ENCODE measurements at regions of chr4 and their contacts with region 1.

Region 1: DNA sequence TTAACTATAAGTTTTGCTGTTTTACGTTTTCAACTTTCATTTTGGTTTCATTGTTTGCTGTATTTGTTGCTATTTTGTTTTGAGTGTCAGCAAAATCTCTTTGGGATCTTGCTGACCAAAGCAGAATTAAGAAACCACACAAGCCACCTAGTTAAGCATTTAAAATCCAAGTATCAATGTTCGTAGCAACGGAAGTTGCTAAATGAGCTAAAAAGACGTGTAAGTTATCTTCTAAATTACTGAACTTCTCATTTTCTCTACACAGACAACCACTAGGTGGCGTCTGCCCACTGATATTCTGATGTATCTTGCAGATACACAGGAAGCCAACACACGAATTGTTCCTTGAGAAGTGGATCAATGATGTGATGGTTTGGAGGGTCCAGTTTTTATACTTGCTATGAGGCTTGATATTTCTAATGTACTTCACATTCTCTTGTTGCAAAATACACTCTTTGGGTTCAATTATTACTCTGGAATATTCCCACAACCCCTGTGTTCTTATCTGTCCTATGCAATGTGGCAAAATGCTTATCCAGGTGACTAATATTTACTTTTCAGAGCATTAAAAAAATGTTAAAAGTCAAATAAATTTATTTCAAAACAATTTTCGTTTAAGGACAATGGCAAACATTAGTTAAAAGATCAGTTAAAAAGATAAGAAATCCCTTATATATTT is 250.5 kb downstream of the TECRL start:
- DNase-seq: no peak
- H3K4me3 ChIP-seq: peak overlapping the region in 3 of 4 donors; percentile 5 to 38 (median 7)
- H3K27ac ChIP-seq: no peak overlapping the region
- H3K4me1 ChIP-seq: no peaks in the 10 kb centered on the region
- H3K27me3 ChIP-seq: no peaks in the 10 kb centered on the region
- CTCF ChIP-seq: peak; percentile 52 to 81 (median 70)
- EP300 ChIP-seq: no peak
- POLR2A ChIP-seq: no peak

Region 2: DNA sequence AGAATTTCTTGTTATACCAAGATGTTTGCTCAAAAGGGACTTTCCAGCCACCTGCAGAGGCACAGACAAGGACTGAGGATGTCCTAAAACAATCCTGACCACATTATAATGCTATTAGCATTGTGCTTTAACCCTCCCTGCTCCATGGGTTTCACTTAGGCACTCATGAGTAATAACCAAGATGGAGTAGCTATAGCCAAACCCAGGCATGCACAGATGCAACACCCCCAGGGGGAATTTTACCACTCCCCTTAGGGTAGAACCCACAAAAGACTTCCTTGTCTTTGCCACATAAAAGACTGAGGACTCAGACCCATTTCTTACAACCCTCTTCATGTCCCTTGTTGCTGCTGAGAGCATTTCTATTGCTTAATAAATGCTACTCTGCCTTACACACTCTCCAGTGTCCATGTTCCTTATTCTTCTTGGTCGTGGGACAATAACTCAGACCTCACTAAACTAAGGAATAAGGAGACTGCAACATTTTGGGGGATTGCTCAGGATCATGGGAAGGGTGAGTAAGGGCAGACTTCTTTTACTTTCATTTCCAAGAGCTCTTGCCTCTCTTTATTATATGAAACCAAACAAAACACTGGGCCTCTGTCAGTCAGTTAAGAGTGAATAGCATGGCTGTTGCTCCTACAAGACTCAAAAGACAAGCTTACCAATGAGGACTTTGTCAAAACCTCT is 146.9 kb after region 1 on chr4:
- intact Hi-C with region 1: no loop called
- DNase-seq: no peak
- H3K4me3 ChIP-seq: no peak overlapping the region
- H3K27ac ChIP-seq: no peak overlapping the region
- H3K4me1 ChIP-seq: no peaks in the 10 kb centered on the region
- H3K27me3 ChIP-seq: no peaks in the 10 kb centered on the region
- CTCF ChIP-seq: no peak
- EP300 ChIP-seq: no peak
- POLR2A ChIP-seq: no peak

Region 3: GRCh38 chr4:64539234-64539849 is 380.6 kb after region 1 on chr4:
- intact Hi-C with region 1: loop called (anchors 5 kb)
- DNase-seq: no peak
- H3K4me3 ChIP-seq: no peak overlapping the region
- H3K27ac ChIP-seq: no peak overlapping the region
- H3K4me1 ChIP-seq: no peaks in the 10 kb centered on the region
- H3K27me3 ChIP-seq: peaks cover 0 to 5% (median 0%) of the 10 kb centered on the region in 4 donors
- CTCF ChIP-seq: peak; percentile 64 to 84 (median 76)
- EP300 ChIP-seq: no peak
- POLR2A ChIP-seq: no peak